Prostate gland (tissue), 2 donors: ENCODE measurements at regions of chr11 and their contacts with region 1.

Region 1: DNA sequence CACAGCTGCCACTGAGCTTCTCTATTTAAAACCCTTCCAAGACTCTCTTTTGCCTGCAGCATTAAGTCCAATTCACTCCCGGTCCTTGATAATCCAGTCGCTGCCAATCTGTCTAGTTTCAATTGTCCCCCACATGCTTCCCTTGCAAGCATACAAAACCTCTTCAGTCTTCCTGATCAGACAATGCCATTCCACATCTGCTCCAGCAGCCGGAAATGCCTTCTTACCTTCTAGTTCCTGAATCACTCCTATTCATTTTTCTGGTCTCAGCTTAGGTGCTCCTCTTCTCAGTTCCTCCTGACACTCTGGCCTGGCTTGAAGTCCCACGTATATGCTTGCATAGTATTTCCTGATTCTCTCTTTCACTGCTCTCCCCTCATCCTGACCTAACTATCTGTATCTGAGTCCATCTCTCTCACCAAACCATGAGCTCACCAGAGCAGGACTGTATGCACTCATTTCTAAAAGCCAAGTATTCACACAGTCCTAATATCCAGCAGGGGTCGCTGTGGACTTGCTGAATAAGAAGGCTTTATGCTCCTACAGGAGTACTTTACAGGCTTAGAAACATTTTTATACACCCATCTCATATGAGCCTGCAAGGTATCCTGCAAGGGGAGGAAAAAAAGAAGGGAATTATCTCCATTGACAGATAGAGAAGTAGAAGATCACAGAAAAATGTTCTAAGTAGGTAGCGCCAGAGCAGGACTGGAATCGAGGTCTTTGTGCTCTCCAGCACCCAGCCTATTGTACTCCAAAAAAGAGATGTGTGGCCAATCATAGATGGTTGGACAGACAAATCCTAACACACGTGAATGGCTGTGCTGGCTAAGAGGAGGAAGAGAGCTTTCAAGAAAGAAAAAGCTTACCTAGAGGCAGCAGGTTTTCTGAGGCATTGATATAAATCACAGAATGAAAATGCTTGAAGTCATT is 19.2 kb downstream of the XRRA1 start:
- DNase-seq: peak; percentile 83
- H3K4me3 ChIP-seq: no peak overlapping the region
- H3K27ac ChIP-seq: no peak overlapping the region
- H3K4me1 ChIP-seq: no peaks in the 10 kb centered on the region
- H3K27me3 ChIP-seq: no peaks in the 10 kb centered on the region
- CTCF ChIP-seq: peak; percentile 69 to 89 (median 86)
- POLR2A ChIP-seq: no peak

Region 2: DNA sequence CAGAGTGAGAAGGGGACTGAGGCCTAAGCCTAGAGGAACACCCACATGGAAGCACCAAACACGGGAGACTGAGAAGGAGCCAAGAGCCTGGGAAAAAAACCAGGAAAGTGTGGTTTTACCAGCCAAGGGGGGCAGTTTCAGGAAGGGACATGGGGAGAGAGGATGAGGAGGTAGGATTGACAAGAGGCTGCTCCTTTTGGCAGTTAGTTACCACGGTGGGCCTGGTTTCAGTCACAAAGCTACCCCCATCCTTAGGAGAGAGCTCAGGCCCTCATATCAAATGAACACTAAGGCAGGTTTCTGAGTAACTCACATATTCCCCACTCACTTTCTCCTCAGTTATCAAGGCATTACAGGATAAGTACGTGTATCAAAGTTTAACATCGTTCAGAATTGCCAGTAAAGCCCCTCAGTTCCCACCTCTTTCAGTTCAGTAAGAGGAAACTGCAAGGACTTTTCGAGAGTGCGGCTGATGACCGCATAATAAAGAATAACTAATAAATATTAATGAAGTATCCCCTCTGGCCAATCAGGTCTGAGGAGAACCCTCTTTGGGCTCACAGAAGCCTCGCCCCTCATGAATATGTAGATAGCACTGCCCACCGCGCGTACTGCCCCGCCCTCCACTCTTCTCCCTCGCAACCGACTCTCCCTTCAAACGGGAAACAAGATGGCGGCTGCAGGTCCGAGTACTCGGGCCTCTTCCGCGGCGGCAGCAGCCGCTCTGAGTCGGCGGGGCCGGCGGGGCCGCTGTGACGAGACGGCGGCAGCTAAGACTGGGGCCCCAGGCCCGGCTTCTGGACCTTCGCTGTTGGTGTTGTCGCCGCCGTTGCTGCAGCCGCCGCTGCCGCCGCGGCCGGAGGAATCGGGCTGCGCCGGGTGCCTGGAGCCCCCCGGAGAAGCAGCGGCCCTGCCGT is 181.2 kb before region 1 on chr11 and contains the start of gene RNF169:
- intact Hi-C with region 1: no loop called
- DNase-seq: peak; percentile 97
- H3K4me3 ChIP-seq: peak within 1 kb of the TSS; percentile 86 to 96
- H3K27ac ChIP-seq: peak within 1 kb of the TSS; percentile 92 to 94
- H3K4me1 ChIP-seq: no peaks in the 10 kb centered on the region
- H3K27me3 ChIP-seq: no peaks in the 10 kb centered on the region
- CTCF ChIP-seq: no peak
- POLR2A ChIP-seq: peak; percentile 91
- total RNA-seq, gene RNF169: 19.7 to 21.2 TPM

Region 3: GRCh38 chr11:75031771-75032549 is 102.3 kb after region 1 on chr11:
- intact Hi-C with region 1: loop called (anchors 2 kb)
- DNase-seq: peak; percentile 55
- H3K4me3 ChIP-seq: no peak overlapping the region
- H3K27ac ChIP-seq: no peak overlapping the region
- H3K4me1 ChIP-seq: no peaks in the 10 kb centered on the region
- H3K27me3 ChIP-seq: no peaks in the 10 kb centered on the region
- CTCF ChIP-seq: peak; percentile 29 to 73 (median 72)
- POLR2A ChIP-seq: no peak

Region 4: DNA sequence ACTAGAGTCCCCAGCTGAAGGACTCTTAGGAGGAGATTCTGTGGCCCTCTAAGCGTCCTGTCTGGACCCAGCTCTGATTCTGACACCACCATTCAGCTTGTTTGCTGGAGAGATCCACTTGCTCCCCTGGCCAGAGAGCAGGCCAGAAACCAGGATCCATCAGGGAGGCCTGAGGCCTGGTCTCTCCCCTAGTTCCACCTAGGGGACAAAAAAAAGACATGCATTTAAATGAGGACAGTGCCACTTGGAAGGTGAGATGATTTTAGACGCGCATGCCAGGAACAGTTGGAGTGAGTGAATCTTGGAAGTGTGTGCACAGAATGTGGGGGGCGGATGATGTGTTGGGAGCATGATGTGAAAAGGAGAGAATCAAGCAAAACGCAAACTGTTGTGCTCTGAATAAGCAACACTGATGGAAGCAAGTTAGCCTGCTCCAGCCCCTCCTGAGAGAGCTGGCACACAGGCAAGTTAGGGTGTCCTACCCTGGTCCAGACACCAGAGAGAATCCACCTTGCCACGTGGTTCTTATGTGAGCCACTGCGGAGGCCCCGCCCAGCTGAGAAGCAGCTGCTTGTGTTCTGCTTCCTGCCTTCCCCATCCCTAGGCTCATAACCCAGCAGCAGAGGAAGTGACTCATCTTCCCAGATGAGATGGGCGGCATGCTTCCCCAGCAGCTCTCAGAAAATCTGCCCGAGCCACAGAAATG is 213.2 kb after region 1 on chr11:
- intact Hi-C with region 1: loop called (anchors 10 kb)
- DNase-seq: no peak
- H3K4me3 ChIP-seq: no peak overlapping the region
- H3K27ac ChIP-seq: no peak overlapping the region
- H3K4me1 ChIP-seq: no peaks in the 10 kb centered on the region
- H3K27me3 ChIP-seq: no peaks in the 10 kb centered on the region
- CTCF ChIP-seq: no peak
- POLR2A ChIP-seq: no peak